Activated CD4-positive, alpha-beta memory T cell treated with anti-CD3 and anti-CD28 coated beads for 36 hours (primary cell): ENCODE measurements at regions of chr18 and their contacts with region 1.

Region 1: DNA sequence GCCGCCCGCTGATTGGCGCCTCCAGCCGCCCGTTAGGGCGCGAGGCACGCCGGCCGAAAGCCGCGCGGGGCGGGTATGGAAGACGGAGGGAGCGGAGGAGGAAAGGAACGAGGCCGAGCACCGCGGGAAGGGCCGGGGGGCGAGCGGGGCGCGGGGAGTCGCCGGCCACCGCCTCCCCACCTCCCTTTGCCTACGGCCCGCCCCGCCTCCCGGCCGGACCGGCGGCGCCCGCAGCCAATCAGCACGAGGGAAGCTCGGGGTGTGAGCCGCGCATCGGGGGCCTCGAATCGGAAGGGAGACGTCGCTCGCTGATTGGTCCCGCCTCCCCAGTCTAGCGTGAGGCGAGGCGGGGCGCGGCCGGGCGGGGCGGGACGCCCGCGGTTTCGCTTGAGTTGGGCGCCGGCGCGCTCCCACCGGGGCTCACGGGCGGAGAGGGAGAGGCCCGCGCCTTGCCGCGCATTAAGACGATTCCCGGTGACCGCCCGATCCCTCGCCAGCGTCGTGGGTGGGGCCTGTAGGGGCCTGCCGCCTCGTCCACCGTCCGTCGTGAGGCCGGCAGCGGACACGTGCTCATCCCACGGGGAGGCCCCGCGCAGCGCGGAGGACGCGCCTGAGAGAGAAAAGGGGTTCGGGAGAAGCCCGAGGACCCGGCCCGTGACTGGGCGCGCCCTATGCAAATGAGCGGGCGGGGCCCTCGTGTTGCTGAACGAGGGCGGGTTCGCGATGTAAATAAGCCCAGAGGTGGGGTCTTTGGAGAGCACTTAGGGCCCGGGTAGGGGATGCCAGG is 665 bp upstream of the SMAD2 start:
- DNase-seq: peak; percentile 96
- H3K4me3 Mint-ChIP-seq: peak overlapping the region; percentile 75
- H3K27ac Mint-ChIP-seq: peak overlapping the region; percentile 86
- H3K4me1 Mint-ChIP-seq: peaks cover 35% of the 10 kb centered on the region
- H3K27me3 Mint-ChIP-seq: no peaks in the 10 kb centered on the region

Region 2: DNA sequence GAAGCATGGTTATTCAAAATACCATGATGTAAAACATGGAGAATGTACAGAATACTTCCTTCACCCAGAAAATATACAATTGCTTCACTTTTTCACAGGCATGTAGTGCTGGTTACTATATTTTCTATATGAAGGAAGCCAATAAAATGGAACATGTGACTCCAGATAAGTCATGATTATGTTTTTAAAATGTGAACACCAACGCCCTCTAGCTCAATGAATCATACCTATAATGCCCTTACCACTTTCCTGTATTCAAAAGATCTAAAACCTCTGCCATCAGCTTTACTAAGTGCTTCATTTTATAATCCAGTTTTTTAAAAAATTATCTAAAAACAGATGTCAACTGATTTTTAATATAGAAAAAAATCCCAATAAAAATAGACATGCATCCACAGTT is 60.5 kb before region 1 on chr18:
- CTCF ChIA-PET with region 1: interaction called, 4 read pairs
- POLR2A ChIA-PET with region 1: interaction called, 3 read pairs
- intact Hi-C with region 1: loop called (anchors 5 kb)
- DNase-seq: no peak
- H3K4me3 Mint-ChIP-seq: no peak overlapping the region
- H3K27ac Mint-ChIP-seq: peak overlapping the region; percentile 14
- H3K4me1 Mint-ChIP-seq: peaks cover 43% of the 10 kb centered on the region
- H3K27me3 Mint-ChIP-seq: no peaks in the 10 kb centered on the region

Region 3: DNA sequence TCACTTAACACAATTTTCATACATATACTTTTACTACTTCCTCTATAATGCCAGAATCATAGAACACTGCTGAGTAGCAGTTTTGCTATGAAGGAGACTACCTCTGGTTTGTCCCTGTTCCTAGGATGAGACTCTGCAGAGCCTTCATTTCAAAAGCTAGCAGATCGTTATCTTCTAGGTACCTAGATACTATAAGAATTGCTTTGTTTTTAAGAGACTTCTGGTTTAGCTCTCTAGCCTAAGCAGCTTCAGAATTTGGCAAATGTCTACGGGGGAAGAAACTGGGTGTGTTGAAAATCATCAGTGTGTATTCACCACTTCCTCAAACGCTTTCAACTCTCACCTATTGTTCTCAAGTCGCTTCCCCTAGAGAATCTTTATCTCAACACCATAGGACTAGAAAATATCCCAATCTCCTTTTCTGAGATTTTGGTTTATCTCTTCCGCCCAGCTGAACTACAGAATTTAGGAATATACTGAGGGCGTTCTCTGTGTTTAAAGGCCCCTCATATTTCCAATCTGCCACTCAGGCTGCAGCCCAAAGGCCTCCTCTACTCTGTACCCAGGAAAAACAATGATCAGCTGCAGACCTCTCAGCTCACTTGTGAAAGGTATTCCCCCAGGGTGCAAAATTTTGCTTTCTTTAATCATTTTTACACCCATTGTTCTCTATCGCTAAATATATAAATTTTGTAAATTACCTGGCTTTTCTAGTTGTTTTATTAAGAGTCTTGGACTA is 29.3 kb before region 1 on chr18:
- CTCF ChIA-PET with region 1: interaction called, 9 read pairs
- POLR2A ChIA-PET with region 1: interaction called, 9 read pairs
- intact Hi-C with region 1: loop called (anchors 1 kb)
- DNase-seq: no peak
- H3K4me3 Mint-ChIP-seq: peak overlapping the region; percentile 9
- H3K27ac Mint-ChIP-seq: peak overlapping the region; percentile 87
- H3K4me1 Mint-ChIP-seq: peaks cover 95% of the 10 kb centered on the region
- H3K27me3 Mint-ChIP-seq: no peaks in the 10 kb centered on the region

Region 4: GRCh38 chr18:47917923-47918610 is 13.1 kb before region 1 on chr18:
- CTCF ChIA-PET with region 1: interaction called, 4 read pairs
- POLR2A ChIA-PET with region 1: interaction called, 24 read pairs
- intact Hi-C with region 1: loop called (anchors 1 kb)
- DNase-seq: peak; percentile 24
- H3K4me3 Mint-ChIP-seq: peak overlapping the region; percentile 58
- H3K27ac Mint-ChIP-seq: peak overlapping the region; percentile 91
- H3K4me1 Mint-ChIP-seq: peaks cover 95% of the 10 kb centered on the region
- H3K27me3 Mint-ChIP-seq: no peaks in the 10 kb centered on the region

Region 5: DNA sequence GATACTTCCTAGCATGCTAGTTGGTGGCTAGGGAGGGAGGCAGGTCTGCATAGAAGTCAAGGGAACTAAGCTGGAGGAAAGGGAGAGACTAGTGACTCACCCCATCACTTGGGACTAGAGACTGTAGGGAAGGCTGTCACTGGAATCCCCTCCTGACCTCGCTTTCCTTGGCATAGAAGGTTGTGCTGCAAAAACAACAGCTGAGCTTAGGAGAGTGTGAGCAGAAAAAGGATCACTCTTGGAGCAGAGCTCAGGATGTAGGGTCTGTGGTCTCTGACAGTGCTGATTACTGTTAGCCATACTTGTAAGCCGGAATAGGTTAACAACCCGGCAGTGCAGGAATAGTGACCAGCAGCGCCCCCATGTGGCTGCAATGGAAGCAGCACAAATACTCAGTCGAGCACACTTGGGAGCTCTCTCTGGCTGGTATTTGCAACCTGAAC is 66.2 kb after region 1 on chr18:
- CTCF ChIA-PET with region 1: interaction called, 6 read pairs
- POLR2A ChIA-PET with region 1: no interaction called
- intact Hi-C with region 1: loop called (anchors 5 kb)
- DNase-seq: peak; percentile 65
- H3K4me3 Mint-ChIP-seq: no peak overlapping the region
- H3K27ac Mint-ChIP-seq: no peak overlapping the region
- H3K4me1 Mint-ChIP-seq: no peaks in the 10 kb centered on the region
- H3K27me3 Mint-ChIP-seq: no peaks in the 10 kb centered on the region

Region 6: GRCh38 chr18:48161191-48161910 is 230.2 kb after region 1 on chr18:
- CTCF ChIA-PET with region 1: no interaction called
- POLR2A ChIA-PET with region 1: no interaction called
- intact Hi-C with region 1: loop called (anchors 5 kb)
- DNase-seq: peak; percentile 78
- H3K4me3 Mint-ChIP-seq: peak overlapping the region; percentile 54
- H3K27ac Mint-ChIP-seq: no peak overlapping the region
- H3K4me1 Mint-ChIP-seq: peaks cover 3% of the 10 kb centered on the region
- H3K27me3 Mint-ChIP-seq: peaks cover 4% of the 10 kb centered on the region

Region 7: GRCh38 chr18:48934723-48935432 is 1003.8 kb after region 1 on chr18:
- CTCF ChIA-PET with region 1: no interaction called
- POLR2A ChIA-PET with region 1: no interaction called
- intact Hi-C with region 1: loop called (anchors 10 kb)
- DNase-seq: no peak
- H3K4me3 Mint-ChIP-seq: peak overlapping the region; percentile 40
- H3K27ac Mint-ChIP-seq: peak overlapping the region; percentile 76
- H3K4me1 Mint-ChIP-seq: peaks cover 89% of the 10 kb centered on the region
- H3K27me3 Mint-ChIP-seq: no peaks in the 10 kb centered on the region